ENCODE measurements at regions of chr19 and their contacts with region 1.

Region 1: GRCh38 chr19:46529622-46530462 is 34.2 kb upstream of the PNMA8B start:
- DNase-seq: peak; percentile 75
- H3K4me3 Mint-ChIP-seq: peak overlapping the region; percentile 39
- H3K27ac Mint-ChIP-seq: no peak overlapping the region
- H3K4me1 Mint-ChIP-seq: peaks cover 15% of the 10 kb centered on the region
- H3K27me3 Mint-ChIP-seq: no peaks in the 10 kb centered on the region
- CTCF ChIP-seq: peak; percentile 94

Region 2: GRCh38 chr19:46542428-46543230 is 12.8 kb after region 1 on chr19:
- CTCF ChIA-PET with region 1: interaction called, 63 read pairs
- POLR2A ChIA-PET with region 1: interaction called, 3 read pairs
- intact Hi-C with region 1: loop called (anchors 1 kb)
- DNase-seq: peak; percentile 93
- H3K4me3 Mint-ChIP-seq: no peak overlapping the region
- H3K27ac Mint-ChIP-seq: no peak overlapping the region
- H3K4me1 Mint-ChIP-seq: no peaks in the 10 kb centered on the region
- H3K27me3 Mint-ChIP-seq: no peaks in the 10 kb centered on the region
- CTCF ChIP-seq: peak; percentile 86

Region 3: DNA sequence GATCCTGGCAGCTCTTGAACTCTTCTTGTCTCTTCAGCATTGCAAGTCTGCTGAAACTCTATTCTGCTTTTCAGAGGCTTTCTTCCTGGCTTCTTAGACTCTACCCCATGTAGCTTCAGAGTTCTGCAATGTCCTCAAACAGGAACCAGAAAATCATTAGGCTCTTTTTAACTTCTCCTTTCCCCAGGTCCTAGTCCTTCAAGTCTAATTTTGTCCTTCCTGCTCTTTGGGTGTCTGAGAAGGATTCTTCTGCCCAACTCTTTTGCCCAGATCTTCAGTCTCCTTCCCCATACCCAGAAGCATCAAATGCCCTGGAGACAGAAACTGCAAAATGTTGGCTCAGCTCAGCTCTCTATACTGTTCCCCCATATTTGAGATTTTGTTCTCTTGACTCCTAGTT is 21.3 kb after region 1 on chr19:
- CTCF ChIA-PET with region 1: interaction called, 63 read pairs
- POLR2A ChIA-PET with region 1: no interaction called
- intact Hi-C with region 1: no loop called
- DNase-seq: no peak
- H3K4me3 Mint-ChIP-seq: no peak overlapping the region
- H3K27ac Mint-ChIP-seq: no peak overlapping the region
- H3K4me1 Mint-ChIP-seq: no peaks in the 10 kb centered on the region
- H3K27me3 Mint-ChIP-seq: peaks cover 13% of the 10 kb centered on the region
- CTCF ChIP-seq: no peak

Region 4: DNA sequence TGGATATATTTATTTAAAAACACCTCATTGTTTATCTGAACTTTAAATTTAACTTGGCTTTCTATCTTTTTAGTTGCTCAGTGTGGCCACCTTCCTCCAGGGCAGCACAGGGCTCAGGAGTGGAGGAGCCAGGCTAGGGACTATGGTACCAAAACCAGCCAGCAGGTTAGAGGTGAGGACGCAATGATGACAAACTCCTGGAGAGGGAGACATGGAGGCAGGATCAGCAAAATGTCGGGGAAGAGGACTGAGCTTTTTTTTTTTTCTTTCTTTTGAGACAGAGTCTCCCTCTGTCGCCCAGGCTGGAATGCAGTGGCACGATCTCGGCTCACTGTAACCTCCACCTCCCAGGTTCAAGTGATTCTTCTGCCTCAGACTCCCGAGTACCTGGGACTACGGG is 41.7 kb after region 1 on chr19:
- CTCF ChIA-PET with region 1: interaction called, 3 read pairs
- POLR2A ChIA-PET with region 1: no interaction called
- intact Hi-C with region 1: loop called (anchors 1 kb)
- DNase-seq: peak; percentile 55
- H3K4me3 Mint-ChIP-seq: no peak overlapping the region
- H3K27ac Mint-ChIP-seq: no peak overlapping the region
- H3K4me1 Mint-ChIP-seq: peaks cover 7% of the 10 kb centered on the region
- H3K27me3 Mint-ChIP-seq: no peaks in the 10 kb centered on the region
- CTCF ChIP-seq: peak; percentile 12

Region 5: GRCh38 chr19:46600384-46601317 is 70.8 kb after region 1 on chr19:
- CTCF ChIA-PET with region 1: no interaction called
- POLR2A ChIA-PET with region 1: interaction called, 11 read pairs
- intact Hi-C with region 1: loop called (anchors 2 kb)
- DNase-seq: peak; percentile 98
- H3K4me3 Mint-ChIP-seq: peak overlapping the region; percentile 96
- H3K27ac Mint-ChIP-seq: peak overlapping the region; percentile 100
- H3K4me1 Mint-ChIP-seq: peaks cover 4% of the 10 kb centered on the region
- H3K27me3 Mint-ChIP-seq: no peaks in the 10 kb centered on the region
- CTCF ChIP-seq: no peak